Aorta (tissue), 5 donors: ENCODE measurements at regions of chr11 and their contacts with region 1.

Region 1: DNA sequence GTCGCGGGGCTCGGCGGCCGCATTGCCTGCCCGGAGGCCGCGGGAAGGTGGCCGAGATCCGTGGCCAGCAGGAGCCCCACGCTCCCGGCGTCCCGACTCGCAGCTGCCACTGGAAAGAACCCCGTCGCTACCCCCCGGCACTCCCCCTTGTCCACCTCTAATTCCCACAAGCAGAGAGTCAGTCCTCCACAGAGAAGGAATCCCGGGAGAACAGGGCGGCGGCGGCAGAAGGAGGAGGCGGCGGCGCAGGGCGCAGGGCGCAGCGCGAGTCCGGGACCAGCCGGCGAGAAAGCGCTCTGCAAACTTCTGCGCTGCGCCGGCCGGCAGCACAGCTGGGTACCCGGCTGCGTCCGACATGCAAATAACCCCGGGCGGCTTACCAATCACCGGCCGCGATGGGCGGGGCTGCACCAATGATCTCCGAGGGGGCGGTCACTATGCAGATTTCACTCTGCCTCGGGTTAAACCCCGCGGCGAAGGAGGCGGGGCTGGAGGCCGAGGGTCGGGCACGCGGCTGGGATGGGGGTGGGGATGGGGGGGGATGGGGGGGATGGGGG is at the start of gene ABTB2:
- DNase-seq: peak; percentile 99
- ATAC-seq: peak; percentile 95
- H3K4me3 ChIP-seq: peak within 1 kb of the TSS; percentile 4 to 71
- H3K27ac ChIP-seq: peak within 1 kb of the TSS in 1 of 2 donors; percentile 71
- H3K4me1 ChIP-seq: peaks cover 0 to 3% of the 10 kb centered on the region in 2 donors
- H3K27me3 ChIP-seq: no peaks in the 10 kb centered on the region
- total RNA-seq, gene ABTB2: 10.5 to 11.4 TPM

Region 2: GRCh38 chr11:33996498-33997454 is 361.0 kb before region 1 on chr11:
- intact Hi-C with region 1: loop called (anchors 2 to 5 kb)
- DNase-seq: peak; percentile 73 to 78
- ATAC-seq: peak; percentile 93
- H3K4me3 ChIP-seq: no peak overlapping the region
- H3K27ac ChIP-seq: no peak overlapping the region
- H3K4me1 ChIP-seq: no peaks in the 10 kb centered on the region
- H3K27me3 ChIP-seq: no peaks in the 10 kb centered on the region

Region 3: DNA sequence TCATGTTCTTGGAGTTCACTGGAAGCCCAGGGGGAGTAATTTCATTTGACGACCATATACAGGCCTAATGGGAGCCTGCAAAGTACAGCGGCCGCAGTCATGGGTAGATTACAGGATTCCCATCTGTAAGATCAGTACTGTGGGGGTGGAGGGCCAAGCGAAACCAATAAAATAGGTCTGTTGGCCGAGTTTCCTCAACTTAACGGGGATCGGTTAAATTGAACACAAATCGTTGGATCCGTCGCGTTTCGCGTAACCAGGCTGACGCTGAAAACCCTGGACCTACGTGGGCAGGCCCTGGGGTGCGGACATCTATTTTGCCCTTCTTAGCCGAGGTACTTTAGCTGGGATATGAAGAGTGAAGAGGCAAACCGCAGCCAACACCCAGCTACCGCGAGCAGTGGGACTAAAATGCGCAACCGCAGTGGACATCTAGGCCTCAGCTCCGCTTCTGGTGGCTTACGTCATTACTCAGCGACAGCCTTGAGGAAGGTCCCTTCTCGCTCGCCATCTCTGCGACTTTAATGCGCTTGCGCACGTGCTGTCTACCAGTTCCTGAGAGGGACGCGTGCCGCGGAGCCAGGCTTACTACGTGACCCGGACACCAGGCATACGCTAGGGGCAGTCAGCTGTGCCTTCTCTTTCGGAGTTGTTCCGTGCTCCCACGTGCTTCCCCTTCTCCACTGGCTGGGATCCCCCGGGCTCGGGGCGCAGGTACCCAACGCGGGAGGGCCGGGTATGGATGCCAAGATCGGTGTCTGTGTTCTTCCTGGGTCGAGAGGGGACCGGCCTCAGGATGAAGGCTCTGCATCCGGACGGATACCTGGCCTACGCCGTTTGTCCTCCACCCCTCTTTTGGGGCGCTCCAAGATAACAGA is 252.5 kb before region 1 on chr11 and contains the start of gene NAT10:
- intact Hi-C with region 1: loop called in 1 of 2 experiments (anchors 2 kb)
- DNase-seq: peak; percentile 97 to 98
- ATAC-seq: peak; percentile 99
- H3K4me3 ChIP-seq: peak within 1 kb of the TSS; percentile 27 to 52
- H3K27ac ChIP-seq: peak within 1 kb of the TSS; percentile 59 to 62
- H3K4me1 ChIP-seq: no peaks in the 10 kb centered on the region
- H3K27me3 ChIP-seq: no peaks in the 10 kb centered on the region
- total RNA-seq, gene NAT10: 33.6 to 42.4 TPM

Region 4: DNA sequence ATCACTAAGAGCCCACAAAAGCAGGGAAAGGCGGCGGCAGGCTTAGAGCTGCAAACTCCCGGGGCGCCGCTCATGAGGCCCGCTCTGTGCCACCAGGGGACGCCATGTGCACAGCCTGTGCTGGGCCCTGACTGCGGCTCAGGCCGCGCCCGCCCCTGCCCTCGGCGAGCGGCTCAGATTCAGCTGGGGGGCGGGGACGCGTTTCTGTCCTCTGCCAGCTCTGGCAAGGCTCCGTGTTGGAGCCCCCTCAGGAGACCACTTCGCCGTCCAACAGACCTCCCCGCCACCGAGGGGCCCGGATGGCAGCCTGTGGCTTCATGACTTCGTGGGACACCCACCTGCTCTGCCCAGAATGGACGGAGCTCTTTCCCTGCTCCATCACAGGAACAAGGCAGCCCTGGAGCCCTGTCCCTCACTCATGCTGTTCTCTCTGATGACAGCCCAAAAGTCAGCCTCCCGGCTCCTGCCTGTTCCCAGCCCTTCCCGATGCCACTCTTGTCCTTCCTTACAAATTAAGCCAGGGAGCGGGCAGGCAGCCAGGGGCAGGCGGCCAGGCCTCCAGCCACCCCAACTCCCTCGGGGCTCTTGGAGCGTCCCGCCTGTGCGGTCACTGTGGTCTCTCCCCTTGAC is 183.3 kb before region 1 on chr11:
- intact Hi-C with region 1: loop called (anchors 1 kb)
- DNase-seq: peak; percentile 90 to 95
- ATAC-seq: peak; percentile 96
- H3K4me3 ChIP-seq: no peak overlapping the region
- H3K27ac ChIP-seq: no peak overlapping the region
- H3K4me1 ChIP-seq: no peaks in the 10 kb centered on the region
- H3K27me3 ChIP-seq: no peaks in the 10 kb centered on the region

Region 5: GRCh38 chr11:34192481-34193401 is 165.0 kb before region 1 on chr11:
- intact Hi-C with region 1: loop called in 1 of 2 experiments (anchors 5 kb)
- DNase-seq: peak; percentile 90 to 91
- ATAC-seq: peak; percentile 86
- H3K4me3 ChIP-seq: no peak overlapping the region
- H3K27ac ChIP-seq: peak overlapping the region; percentile 53 to 81
- H3K4me1 ChIP-seq: no peaks in the 10 kb centered on the region
- H3K27me3 ChIP-seq: no peaks in the 10 kb centered on the region

Region 6: GRCh38 chr11:34250732-34251639 is 106.8 kb before region 1 on chr11:
- intact Hi-C with region 1: loop called in 1 of 2 experiments (anchors 5 kb)
- DNase-seq: peak; percentile 84 to 85
- ATAC-seq: peak; percentile 78
- H3K4me3 ChIP-seq: no peak overlapping the region
- H3K27ac ChIP-seq: peak overlapping the region in 1 of 2 donors; percentile 85
- H3K4me1 ChIP-seq: peaks cover 2 to 3% of the 10 kb centered on the region in 2 donors
- H3K27me3 ChIP-seq: no peaks in the 10 kb centered on the region

Region 7: DNA sequence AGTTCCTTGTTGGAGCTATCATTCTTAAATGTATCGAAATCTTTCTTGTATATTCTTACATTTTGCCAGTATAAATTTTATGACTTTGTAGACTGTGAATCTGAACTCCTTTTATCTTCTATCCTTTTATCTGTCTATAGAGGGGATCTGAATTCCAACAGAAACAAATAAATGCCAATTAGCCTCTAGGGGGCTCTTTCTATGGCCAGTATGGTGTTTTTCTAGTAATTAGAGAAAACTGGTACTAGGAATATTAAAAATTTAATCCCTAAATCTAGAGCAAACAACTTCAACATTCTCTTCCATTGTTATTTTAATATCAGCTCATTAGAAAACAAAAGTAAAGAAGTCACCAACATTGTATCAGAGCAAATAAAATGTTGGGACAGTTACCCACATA is 59.4 kb after region 1 on chr11:
- intact Hi-C with region 1: no loop called
- DNase-seq: no peak
- ATAC-seq: no peak
- H3K4me3 ChIP-seq: no peak overlapping the region
- H3K27ac ChIP-seq: no peak overlapping the region
- H3K4me1 ChIP-seq: no peaks in the 10 kb centered on the region
- H3K27me3 ChIP-seq: no peaks in the 10 kb centered on the region